Activated CD4-positive, alpha-beta T cell treated with anti-CD3 and anti-CD28 coated beads for 36 hours (primary cell): ENCODE measurements at regions of chr1 and their contacts with region 1.

Region 1: GRCh38 chr1:243596431-243597062 is 253.5 kb downstream of the AKT3 start:
- DNase-seq: peak; percentile 51
- ATAC-seq: peak; percentile 61
- H3K4me3 Mint-ChIP-seq: peak overlapping the region; percentile 23
- H3K27ac Mint-ChIP-seq: peak overlapping the region; percentile 79
- H3K4me1 Mint-ChIP-seq: peaks cover 30% of the 10 kb centered on the region
- H3K27me3 Mint-ChIP-seq: no peaks in the 10 kb centered on the region

Region 2: DNA sequence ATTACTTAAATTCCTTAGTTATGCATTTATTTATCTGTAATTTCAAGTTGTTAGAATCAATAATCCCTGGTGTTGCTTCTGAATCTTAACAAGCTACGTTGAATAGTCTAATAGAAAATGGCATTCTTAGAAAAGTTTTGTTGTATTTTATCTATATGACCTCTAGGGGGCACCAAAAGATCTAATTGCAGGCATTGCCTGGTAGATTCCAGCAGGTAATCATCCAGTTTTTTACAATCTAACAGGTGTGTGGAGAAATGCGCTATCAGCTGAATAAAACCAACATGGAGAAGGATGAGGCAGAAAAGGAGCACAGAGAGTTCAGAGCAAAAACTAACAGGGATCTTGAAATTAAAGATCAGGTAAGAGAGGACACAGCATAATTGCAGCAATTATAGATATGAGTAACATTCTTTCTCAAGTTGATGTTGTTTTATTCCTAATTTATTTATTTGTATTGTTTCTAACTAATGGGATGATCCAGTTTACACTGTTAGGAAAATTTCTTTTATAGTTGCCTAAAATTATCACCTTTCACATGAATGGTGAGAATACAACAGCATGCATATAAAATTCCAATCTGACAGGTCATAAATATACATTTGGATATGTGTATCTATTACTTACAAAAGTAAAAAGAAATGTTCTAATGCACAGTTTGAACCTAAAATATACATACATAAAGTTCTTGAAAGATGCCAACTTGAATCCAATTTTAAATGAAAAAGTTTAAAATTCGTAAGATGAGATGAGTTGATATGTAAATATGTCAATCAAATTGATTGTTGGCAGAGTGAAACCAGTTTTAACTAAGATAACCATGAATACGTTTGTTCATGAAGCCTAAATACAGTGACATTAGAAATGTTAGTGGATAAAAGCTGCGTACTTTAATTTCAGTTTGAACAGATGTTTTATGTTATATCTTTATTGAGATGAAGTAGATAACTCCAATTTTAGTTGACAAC is 252.3 kb before region 1 on chr1:
- CTCF ChIA-PET with region 1: no interaction called
- POLR2A ChIA-PET with region 1: no interaction called
- intact Hi-C with region 1: loop called in 1 of 2 experiments (anchors 10 kb)
- DNase-seq: no peak
- ATAC-seq: no peak
- H3K4me3 Mint-ChIP-seq: no peak overlapping the region
- H3K27ac Mint-ChIP-seq: no peak overlapping the region
- H3K4me1 Mint-ChIP-seq: peaks cover 6% of the 10 kb centered on the region
- H3K27me3 Mint-ChIP-seq: no peaks in the 10 kb centered on the region

Region 3: DNA sequence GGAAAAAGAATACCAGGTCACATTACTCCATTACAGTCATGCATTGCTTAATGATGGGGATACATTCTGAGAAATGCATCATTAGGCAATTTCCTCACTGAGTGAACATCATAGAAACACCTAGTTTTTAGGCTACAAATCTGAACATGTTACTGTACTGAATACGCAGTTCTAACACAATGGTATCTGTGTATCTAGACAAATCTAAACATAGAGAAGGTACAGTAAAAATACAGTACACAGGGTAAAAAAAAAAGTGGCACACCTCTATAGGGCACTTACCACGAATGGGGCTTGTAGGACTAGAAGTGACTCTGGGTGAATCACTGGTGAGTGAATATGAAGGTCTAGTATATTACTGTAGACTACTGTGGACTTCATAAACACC is 137.8 kb after region 1 on chr1:
- CTCF ChIA-PET with region 1: no interaction called
- POLR2A ChIA-PET with region 1: no interaction called
- intact Hi-C with region 1: loop called in 1 of 2 experiments (anchors 2 kb)
- DNase-seq: no peak
- ATAC-seq: peak; percentile 60
- H3K4me3 Mint-ChIP-seq: no peak overlapping the region
- H3K27ac Mint-ChIP-seq: no peak overlapping the region
- H3K4me1 Mint-ChIP-seq: peaks cover 18% of the 10 kb centered on the region
- H3K27me3 Mint-ChIP-seq: no peaks in the 10 kb centered on the region

Region 4: DNA sequence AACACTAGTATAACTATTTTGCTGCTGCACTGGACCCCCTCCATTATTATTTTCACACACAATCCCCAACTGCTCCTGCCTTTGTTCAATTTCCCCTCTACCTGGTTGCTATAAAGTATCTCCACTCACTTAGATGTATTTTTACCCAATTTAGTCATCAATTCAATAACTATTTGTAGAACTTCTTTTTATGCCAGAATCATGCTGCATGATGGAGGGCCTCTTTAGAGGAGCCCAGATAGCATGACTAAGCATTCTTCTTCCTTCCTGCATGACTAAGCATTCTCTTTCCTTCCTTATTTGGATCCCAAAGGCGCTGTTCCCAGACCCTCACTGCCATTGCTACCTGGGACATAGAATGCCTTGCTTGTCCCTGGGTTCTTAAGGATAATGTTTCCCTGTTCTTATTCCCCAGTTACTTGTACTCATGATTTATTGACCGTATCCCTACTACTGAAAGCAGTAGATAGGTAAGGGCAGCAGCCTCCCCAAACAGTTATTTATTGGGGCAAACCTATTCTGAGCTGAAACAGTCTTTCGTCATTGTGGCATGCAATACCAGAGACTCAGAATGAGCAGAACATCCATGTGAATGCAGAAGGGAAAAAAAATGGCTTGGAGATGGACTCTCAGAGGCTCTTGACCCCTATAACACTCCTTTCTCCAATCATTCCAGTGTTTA is 342.8 kb after region 1 on chr1:
- CTCF ChIA-PET with region 1: no interaction called
- POLR2A ChIA-PET with region 1: no interaction called
- intact Hi-C with region 1: loop called in 1 of 2 experiments (anchors 2 kb)
- DNase-seq: no peak
- ATAC-seq: no peak
- H3K4me3 Mint-ChIP-seq: no peak overlapping the region
- H3K27ac Mint-ChIP-seq: no peak overlapping the region
- H3K4me1 Mint-ChIP-seq: peaks cover 15% of the 10 kb centered on the region
- H3K27me3 Mint-ChIP-seq: peaks cover 22% of the 10 kb centered on the region

Region 5: GRCh38 chr1:244302889-244303613 is 706.5 kb after region 1 on chr1:
- CTCF ChIA-PET with region 1: no interaction called
- POLR2A ChIA-PET with region 1: no interaction called
- intact Hi-C with region 1: loop called in 1 of 2 experiments (anchors 1 kb)
- DNase-seq: no peak
- ATAC-seq: no peak
- H3K4me3 Mint-ChIP-seq: no peak overlapping the region
- H3K27ac Mint-ChIP-seq: no peak overlapping the region
- H3K4me1 Mint-ChIP-seq: peaks cover 11% of the 10 kb centered on the region
- H3K27me3 Mint-ChIP-seq: no peaks in the 10 kb centered on the region